K562 (cell line): ENCODE measurements at regions of chr10 and their contacts with region 1.

Region 1: GRCh38 chr10:63767138-63767801 is 246.1 kb downstream of the REEP3 start:
- DNase-seq: peak in 1 of 4 experiments; percentile 9
- ATAC-seq: peak; percentile 56; the same call in 1 of the 3 replicates
- H3K4me3 ChIP-seq: no peak overlapping the region
- H3K27ac ChIP-seq: no peak overlapping the region
- H3K4me1 ChIP-seq: no peaks in the 10 kb centered on the region
- H3K27me3 ChIP-seq: no peaks in the 10 kb centered on the region
- CTCF ChIP-seq: peak in 2 of 3 experiments; percentile 32 to 64; a peak in 4 of 6 replicates
- EP300 ChIP-seq: no peak
- POLR2A ChIP-seq: no peak
- RAD21 ChIP-seq: peak; percentile 75 to 76

Region 2: DNA sequence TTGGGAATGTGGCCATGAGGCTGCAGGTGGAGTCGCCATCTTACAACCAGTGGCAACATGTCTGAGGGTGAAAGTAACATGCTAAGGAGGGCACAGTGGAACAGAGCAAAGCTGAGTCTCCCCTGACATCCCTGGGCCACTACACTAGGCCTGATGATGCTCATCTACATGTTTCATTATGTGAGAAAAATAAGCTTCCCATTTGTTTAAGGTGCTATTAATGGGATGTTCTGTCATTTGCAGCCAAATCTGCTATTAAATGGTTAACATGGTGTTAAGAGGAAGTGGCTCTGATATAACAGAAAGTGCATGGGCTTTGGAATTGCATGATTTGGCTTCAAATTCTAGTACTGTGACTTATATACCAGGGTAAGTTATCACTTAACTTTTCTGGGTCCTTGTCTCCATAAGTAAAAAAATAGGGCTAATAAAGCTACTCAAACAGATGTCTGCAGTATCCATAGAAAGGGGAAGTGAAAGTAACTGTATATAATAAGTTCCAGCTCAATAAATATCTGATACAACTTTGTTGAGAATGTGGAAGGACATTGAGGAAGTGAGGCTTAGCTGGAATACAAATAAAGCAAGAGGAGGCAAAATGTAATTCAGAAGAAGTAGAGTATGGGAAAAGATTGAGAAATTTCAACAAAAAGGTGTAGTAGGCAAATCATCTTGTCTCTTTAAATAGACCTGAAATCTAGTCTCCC is 1657.5 kb before region 1 on chr10:
- CTCF ChIA-PET with region 1: no interaction called
- POLR2A ChIA-PET with region 1: no interaction called
- in situ Hi-C with region 1: loop called (anchors 25 kb)
- intact Hi-C with region 1: no loop called
- DNase-seq: no peak
- ATAC-seq: no peak
- H3K4me3 ChIP-seq: no peak overlapping the region
- H3K27ac ChIP-seq: no peak overlapping the region
- H3K4me1 ChIP-seq: no peaks in the 10 kb centered on the region
- H3K27me3 ChIP-seq: peaks cover 0 to 2% of the 10 kb centered on the region in 2 experiments; a peak in 2 of 5 replicates
- CTCF ChIP-seq: no peak
- EP300 ChIP-seq: no peak
- POLR2A ChIP-seq: no peak
- RAD21 ChIP-seq: no peak

Region 3: DNA sequence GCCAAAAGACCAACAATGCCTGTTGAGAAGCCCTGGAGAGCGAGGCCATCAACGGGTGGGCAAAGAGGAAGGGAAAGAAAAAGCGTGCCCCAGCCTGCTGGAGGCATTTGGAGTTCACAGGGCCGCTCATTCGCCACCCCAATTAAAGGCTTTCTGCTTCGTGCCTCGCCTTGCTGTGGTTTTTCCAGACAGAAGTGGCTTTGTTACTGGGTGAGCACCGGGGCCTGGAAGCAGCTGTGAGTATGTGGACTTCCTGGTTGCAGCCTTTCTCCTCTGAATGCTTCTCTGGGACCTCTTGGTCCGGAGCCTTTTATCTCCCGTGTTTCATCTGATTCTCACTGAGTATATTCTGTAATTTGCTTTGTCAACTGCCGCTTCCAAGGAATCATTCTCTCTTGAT is 833.0 kb before region 1 on chr10:
- CTCF ChIA-PET with region 1: no interaction called
- POLR2A ChIA-PET with region 1: no interaction called
- in situ Hi-C with region 1: no loop called
- intact Hi-C with region 1: no loop called
- DNase-seq: no peak
- ATAC-seq: no peak
- H3K4me3 ChIP-seq: no peak overlapping the region
- H3K27ac ChIP-seq: no peak overlapping the region
- H3K4me1 ChIP-seq: no peaks in the 10 kb centered on the region
- H3K27me3 ChIP-seq: peaks cover 5 to 10% of the 10 kb centered on the region in 2 experiments; a peak in 3 of 5 replicates
- CTCF ChIP-seq: no peak
- EP300 ChIP-seq: no peak
- POLR2A ChIP-seq: no peak
- RAD21 ChIP-seq: no peak

Region 4: GRCh38 chr10:63166742-63167258 is 600.5 kb before region 1 on chr10:
- CTCF ChIA-PET with region 1: interaction called, 24 read pairs
- POLR2A ChIA-PET with region 1: no interaction called
- in situ Hi-C with region 1: no loop called
- intact Hi-C with region 1: loop called (anchors 5 kb)
- DNase-seq: peak; percentile 40 to 80 (median 61)
- ATAC-seq: peak; percentile 83
- H3K4me3 ChIP-seq: no peak overlapping the region
- H3K27ac ChIP-seq: no peak overlapping the region
- H3K4me1 ChIP-seq: no peaks in the 10 kb centered on the region
- H3K27me3 ChIP-seq: no peaks in the 10 kb centered on the region
- CTCF ChIP-seq: peak; percentile 68 to 89 (median 75)
- EP300 ChIP-seq: no peak
- POLR2A ChIP-seq: 0 out of 2 replicates have a peak, but pooled peaks have one; percentile 38
- RAD21 ChIP-seq: peak; percentile 91

Region 5: DNA sequence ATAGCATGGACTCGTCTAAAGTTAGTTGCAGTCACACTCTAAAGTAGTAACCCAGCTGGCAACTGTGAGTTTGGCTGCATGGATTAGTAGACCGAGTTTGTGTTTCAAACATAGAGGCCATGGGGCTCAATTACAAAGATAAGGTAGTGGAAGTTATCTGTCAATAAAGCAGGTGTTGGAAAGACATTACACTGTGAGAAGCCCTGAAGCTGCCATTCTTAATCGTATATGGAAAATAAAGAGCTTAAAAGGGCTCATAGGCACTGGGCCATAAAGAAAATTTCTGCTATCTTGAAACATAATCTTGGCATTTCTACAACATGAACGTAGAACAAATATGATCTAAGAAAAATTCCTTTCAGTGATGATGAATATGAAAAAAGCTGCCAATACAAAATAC is 591.6 kb after region 1 on chr10:
- CTCF ChIA-PET with region 1: no interaction called
- POLR2A ChIA-PET with region 1: no interaction called
- in situ Hi-C with region 1: no loop called
- intact Hi-C with region 1: no loop called
- DNase-seq: no peak
- ATAC-seq: no peak
- H3K4me3 ChIP-seq: no peak overlapping the region
- H3K27ac ChIP-seq: no peak overlapping the region
- H3K4me1 ChIP-seq: no peaks in the 10 kb centered on the region
- H3K27me3 ChIP-seq: no peaks in the 10 kb centered on the region
- CTCF ChIP-seq: no peak
- EP300 ChIP-seq: no peak
- POLR2A ChIP-seq: no peak
- RAD21 ChIP-seq: no peak